Natural killer cell (primary cell): ENCODE measurements at regions of chr4 and their contacts with region 1.

Region 1: GRCh38 chr4:83012687-83013419 is 2.2 kb upstream of the LIN54 start:
- DNase-seq: peak; percentile 96 to 98
- ATAC-seq: peak; percentile 88 to 97 (median 89)
- H3K4me3 ChIP-seq: peak overlapping the region; percentile 94
- H3K4me3 Mint-ChIP-seq: peak overlapping the region; percentile 94
- H3K27ac ChIP-seq: peak overlapping the region; percentile 80
- H3K27ac Mint-ChIP-seq: peak overlapping the region; percentile 98 to 100
- H3K4me1 ChIP-seq: peaks cover 16% of the 10 kb centered on the region
- H3K4me1 Mint-ChIP-seq: peaks cover 48 to 53% of the 10 kb centered on the region in 2 donors
- H3K27me3 ChIP-seq: no peaks in the 10 kb centered on the region
- H3K27me3 Mint-ChIP-seq: no peaks in the 10 kb centered on the region
- CTCF ChIP-seq: peak; percentile 48

Region 2: DNA sequence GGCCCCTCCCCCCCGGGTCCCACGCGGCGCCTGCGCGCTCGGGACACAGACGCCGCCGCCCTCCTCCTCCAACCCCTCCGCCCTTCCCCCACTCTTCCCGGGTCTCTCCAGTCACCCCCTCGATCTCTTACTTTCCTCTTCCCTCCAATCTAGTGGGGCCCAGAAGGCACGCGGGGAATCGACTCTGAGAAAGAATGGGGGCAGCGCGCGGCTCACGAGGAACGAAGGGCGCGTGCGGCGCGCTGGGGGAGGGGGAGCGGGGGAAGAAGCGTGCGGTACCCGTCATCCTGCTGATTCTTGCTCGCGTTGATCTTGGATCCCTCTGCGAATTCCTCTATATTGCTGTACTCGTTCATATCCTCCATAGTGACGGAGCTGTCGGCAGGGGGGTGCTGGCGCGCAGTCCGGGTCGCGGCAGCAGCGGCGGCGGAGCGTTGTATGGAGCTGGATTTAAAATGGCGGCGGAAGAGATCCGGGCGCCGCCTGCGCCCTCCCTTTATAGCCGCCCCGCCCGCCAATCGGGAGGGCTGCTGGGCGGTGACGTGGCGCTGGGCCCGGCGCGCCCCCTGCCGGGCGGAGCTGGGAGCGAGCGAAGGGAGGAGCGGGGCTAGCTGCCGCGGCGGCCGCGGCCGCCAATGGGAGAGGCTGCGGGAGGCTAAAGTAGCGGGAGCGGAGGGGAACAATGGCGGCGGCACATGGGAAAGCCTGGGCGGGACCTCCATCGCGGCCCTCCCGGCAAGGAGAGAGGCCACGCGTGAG is 583.7 kb before region 1 on chr4:
- intact Hi-C with region 1: loop called (anchors 5 kb)
- DNase-seq: peak; percentile 94 to 97
- ATAC-seq: peak; percentile 67 to 87 (median 70)
- H3K4me3 ChIP-seq: peak overlapping the region; percentile 100
- H3K4me3 Mint-ChIP-seq: peak overlapping the region; percentile 100
- H3K27ac ChIP-seq: peak overlapping the region; percentile 100
- H3K27ac Mint-ChIP-seq: peak overlapping the region; percentile 96
- H3K4me1 ChIP-seq: peaks cover 15% of the 10 kb centered on the region
- H3K4me1 Mint-ChIP-seq: peaks cover 46 to 60% of the 10 kb centered on the region in 2 donors
- H3K27me3 ChIP-seq: no peaks in the 10 kb centered on the region
- H3K27me3 Mint-ChIP-seq: no peaks in the 10 kb centered on the region
- CTCF ChIP-seq: peak; percentile 94

Region 3: DNA sequence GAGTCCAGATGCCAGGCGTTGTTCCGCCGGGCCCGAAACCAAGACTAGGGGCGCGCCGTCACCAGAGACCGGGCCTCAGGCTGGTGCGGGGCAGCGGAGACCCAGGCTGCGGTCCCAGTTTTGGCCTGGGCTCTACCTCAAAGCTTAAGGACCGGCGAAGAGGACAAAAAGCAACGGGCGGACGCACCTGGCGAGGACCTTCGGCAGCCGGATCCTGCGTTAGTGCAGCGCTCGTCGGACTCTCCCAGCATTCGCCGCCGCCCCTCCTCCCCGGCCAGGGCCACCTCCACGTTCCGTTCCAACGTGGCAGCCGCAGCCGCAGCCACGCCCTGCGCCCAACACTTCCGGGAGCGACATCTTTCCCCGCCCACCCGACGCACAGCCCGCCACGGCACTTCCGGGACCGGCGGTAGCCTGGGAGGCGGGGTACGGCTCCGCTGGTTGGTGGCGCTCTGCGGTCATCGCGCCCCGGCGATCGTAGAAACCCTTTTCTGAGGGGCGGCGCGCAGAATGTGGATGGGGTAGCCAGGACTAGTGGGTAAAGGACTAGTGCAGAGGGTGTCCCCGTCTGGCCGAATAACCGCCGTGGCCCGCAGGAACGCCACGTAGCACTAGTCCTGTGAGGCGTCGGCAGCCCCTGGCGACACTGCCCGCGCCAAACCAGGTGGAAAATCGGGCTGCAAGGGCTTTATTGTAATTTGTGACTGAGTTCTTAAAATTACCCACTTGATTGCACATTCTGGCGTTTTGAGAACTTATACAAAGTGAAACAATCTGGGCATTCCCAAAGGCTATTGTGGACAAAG is 121.7 kb before region 1 on chr4 and contains the start of gene SEC31A:
- intact Hi-C with region 1: loop called (anchors 1 kb)
- DNase-seq: peak; percentile 96 to 98
- ATAC-seq: peak; percentile 92 to 98 (median 93)
- H3K4me3 ChIP-seq: peak within 1 kb of the TSS; percentile 96
- H3K4me3 Mint-ChIP-seq: peak within 1 kb of the TSS; percentile 96
- H3K27ac ChIP-seq: peak within 1 kb of the TSS; percentile 89
- H3K27ac Mint-ChIP-seq: peak within 1 kb of the TSS; percentile 97 to 99
- H3K4me1 ChIP-seq: peaks cover 7% of the 10 kb centered on the region
- H3K4me1 Mint-ChIP-seq: peaks cover 19 to 33% of the 10 kb centered on the region in 2 donors
- H3K27me3 ChIP-seq: no peaks in the 10 kb centered on the region
- H3K27me3 Mint-ChIP-seq: no peaks in the 10 kb centered on the region
- CTCF ChIP-seq: no peak
- total RNA-seq, gene SEC31A: 176 to 183 (median 177) TPM

Region 4: DNA sequence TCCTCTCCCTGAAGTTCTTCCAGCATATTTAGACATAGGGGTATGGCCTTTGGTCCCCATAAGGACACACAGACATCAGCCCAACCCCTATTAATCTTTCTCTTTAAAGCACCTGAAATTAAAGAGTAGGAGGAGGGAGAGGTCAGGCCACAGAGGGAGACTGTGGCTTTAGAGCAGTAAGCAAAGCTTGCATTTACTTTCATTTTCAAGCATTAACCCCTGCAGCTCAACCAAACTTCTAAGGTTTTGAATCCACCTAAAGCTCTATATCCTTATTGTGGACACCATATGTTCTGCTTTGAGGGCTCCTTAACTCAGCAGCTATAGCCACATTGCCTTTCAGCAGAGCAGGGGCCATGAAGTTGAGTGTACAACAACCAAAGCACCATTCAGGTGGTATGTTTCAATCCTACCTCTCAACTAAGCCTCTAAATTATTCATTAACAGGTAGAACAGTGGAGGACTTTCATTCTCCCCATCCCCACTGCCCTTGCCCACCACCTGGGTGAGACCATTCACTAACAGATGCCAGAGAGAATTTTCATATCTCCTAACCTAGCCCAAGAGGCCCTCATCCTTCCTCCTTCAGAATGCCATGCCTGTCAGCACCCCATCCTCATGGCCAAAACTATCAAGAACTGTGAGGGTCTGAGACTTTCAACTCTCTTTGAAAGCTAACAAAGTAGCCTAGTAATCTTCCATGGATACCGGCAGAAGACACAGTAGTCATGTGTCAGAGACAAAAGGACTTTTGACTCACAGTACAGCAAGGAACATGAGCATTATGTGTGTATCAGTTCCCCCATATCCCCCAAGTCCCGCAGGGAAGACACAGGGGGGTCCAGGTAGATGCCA is 23.1 kb before region 1 on chr4:
- intact Hi-C with region 1: loop called (anchors 1 kb)
- DNase-seq: peak in 1 of 2 donors; percentile 38
- ATAC-seq: peak; percentile 59 to 73 (median 63)
- H3K4me3 ChIP-seq: no peak overlapping the region
- H3K4me3 Mint-ChIP-seq: peak overlapping the region; percentile 60
- H3K27ac ChIP-seq: peak overlapping the region; percentile 55
- H3K27ac Mint-ChIP-seq: peak overlapping the region; percentile 77 to 87
- H3K4me1 ChIP-seq: peaks cover 25% of the 10 kb centered on the region
- H3K4me1 Mint-ChIP-seq: peaks cover 25 to 29% of the 10 kb centered on the region in 2 donors
- H3K27me3 ChIP-seq: no peaks in the 10 kb centered on the region
- H3K27me3 Mint-ChIP-seq: no peaks in the 10 kb centered on the region
- CTCF ChIP-seq: no peak

Region 5: DNA sequence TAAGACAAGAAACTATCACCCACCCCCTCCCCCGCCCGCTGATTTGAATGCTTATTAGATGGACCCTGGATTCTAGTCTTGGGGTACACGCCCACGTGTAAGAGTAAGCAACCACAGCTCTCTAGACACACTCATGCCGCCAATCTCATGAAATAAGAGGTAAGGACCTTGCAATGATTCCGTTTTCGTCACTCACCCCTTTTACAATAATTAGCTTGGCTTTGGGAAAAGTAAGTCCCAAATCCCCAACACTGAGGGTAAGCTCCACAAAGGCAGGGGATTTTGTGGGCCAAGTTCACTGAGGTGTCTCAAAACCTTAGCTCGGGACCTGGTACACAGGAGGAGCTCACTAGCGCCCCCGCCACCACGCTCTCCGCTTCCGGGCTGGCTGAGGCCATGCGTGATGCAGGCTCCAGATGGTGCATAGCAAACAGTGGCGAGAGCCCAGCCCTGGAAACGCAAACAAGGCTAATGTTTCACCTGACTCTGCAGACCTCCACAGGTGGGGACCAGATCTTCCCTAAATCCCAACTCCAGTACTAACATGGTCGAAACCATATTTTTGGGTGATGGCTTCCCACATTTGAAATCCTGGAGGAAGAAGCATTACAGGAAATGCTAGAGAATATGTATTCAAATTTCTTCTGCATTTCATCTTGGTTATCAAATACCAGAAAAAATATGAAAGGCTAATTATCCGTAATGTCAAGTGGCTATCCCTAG is 97.5 kb after region 1 on chr4:
- intact Hi-C with region 1: loop called (anchors 5 kb)
- DNase-seq: peak; percentile 84 to 94
- ATAC-seq: peak; percentile 65 to 87 (median 77)
- H3K4me3 ChIP-seq: peak overlapping the region; percentile 79
- H3K4me3 Mint-ChIP-seq: peak overlapping the region; percentile 90
- H3K27ac ChIP-seq: peak overlapping the region; percentile 67
- H3K27ac Mint-ChIP-seq: peak overlapping the region; percentile 96 to 98
- H3K4me1 ChIP-seq: peaks cover 38% of the 10 kb centered on the region
- H3K4me1 Mint-ChIP-seq: peaks cover 58 to 67% of the 10 kb centered on the region in 2 donors
- H3K27me3 ChIP-seq: no peaks in the 10 kb centered on the region
- H3K27me3 Mint-ChIP-seq: no peaks in the 10 kb centered on the region
- CTCF ChIP-seq: peak; percentile 71

Region 6: DNA sequence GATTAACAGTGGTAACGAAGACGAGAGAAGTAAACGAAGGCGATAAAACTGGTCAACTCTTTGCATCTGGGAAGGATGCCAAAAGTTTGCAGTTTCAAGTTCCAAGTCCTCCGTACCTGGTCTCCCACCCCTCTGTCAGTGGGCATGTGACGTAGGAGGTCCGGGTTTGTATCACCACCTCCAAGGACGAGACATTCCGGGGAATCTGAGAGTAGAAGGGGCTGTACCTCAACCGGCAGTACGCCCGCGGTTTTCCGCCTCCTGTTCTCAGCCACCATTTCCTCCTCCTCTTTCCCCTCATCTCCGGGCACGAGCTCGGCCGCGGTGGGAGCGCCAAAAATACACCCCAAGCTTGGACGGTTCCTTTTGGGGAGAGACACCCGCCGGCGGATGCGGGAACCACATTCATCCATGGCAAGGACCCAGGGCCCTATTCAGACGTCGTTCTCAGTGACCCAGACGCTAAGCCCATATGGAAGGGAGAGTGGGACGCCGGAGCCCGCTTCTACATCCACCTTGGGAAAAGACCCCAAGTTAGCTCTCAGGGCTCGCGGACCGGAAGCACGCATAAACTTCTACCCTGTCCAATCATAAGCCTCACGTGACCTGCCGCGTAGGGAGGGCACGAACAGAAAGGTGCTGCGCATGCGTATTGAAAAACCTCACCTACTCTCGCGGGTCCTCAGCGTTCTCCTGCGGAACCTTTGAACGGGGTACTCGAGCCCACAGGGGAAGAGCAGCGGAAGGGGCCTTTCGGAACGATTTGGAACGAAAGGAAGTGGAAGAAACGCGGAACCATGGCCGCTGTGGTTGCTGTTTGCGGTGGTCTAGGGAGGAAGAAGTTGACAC is 442.7 kb after region 1 on chr4 and contains the starts of genes HELQ and MRPS18C:
- intact Hi-C with region 1: loop called (anchors 5 kb)
- DNase-seq: peak; percentile 89 to 99
- ATAC-seq: peak; percentile 89 to 96 (median 93)
- H3K4me3 ChIP-seq: peak within 1 kb of the TSS; percentile 78
- H3K4me3 Mint-ChIP-seq: peak within 1 kb of the TSS; percentile 100
- H3K27ac ChIP-seq: peak within 1 kb of the TSS; percentile 94
- H3K27ac Mint-ChIP-seq: peak within 1 kb of the TSS; percentile 97 to 100
- H3K4me1 ChIP-seq: peaks cover 9% of the 10 kb centered on the region
- H3K4me1 Mint-ChIP-seq: peaks cover 35 to 39% of the 10 kb centered on the region in 2 donors
- H3K27me3 ChIP-seq: no peaks in the 10 kb centered on the region
- H3K27me3 Mint-ChIP-seq: no peaks in the 10 kb centered on the region
- CTCF ChIP-seq: no peak
- total RNA-seq, gene HELQ: 19.8 to 33.6 (median 29.9) TPM
- total RNA-seq, gene MRPS18C: 14.4 to 26.0 (median 18.1) TPM